SK-N-SH (cell line): ENCODE measurements at regions of chr12 and their contacts with region 1.

Region 1: DNA sequence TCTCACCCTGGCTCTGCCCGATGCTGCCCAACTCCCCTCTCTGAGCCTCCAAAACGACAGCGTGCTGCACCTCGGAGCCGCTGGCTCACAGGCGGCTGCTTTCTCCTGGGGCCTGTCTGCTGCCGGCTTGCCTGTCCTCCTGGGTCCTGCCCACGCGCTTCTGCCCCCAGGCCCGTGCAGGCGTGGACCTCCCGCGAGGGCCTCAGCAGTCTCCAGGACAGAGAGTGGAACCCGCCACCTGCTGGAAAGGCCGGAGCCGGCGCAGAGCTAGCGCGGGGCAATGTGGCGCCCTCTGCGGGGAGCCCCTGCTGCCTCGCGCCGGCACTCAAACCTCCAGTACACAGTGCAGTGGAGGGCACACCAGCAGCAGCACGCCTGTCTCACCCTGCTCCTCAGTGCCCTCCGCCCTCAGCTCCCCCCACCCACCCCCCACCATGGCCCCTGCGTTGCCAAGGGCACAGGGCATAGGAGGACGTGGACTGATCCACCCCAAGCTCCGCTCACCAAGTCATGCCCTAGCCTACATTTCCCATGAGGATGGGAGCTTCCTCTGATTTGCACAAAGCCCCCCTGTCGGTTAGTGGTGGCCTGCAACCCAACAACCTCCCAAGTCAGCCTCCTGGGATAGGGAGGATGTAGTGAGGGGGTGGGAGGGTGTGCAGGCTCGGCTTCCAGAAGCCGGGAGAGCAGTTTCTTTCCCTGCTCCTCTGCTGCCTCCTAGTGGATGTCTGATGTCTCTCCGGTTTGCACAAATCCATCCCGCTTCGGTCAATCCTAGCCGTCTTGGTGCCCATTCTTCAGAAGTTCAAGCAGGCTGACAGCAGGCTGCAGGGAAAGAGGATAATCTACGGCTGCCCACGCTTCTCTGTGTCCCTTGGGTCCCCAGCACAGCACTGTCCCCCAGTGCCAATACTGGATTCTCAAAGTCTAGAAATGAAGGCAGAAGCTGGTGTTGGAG is 25.2 kb downstream of the KRT8 start:
- DNase-seq: peak; percentile 88
- H3K4me3 ChIP-seq: peak overlapping the region; percentile 10 to 51; a peak in 1 of 4 replicates
- H3K27ac ChIP-seq: no peak overlapping the region
- H3K4me1 ChIP-seq: peaks cover 0 to under 1% of the 10 kb centered on the region in 2 experiments; a peak in 1 of 4 replicates
- H3K27me3 ChIP-seq: no peaks in the 10 kb centered on the region
- CTCF ChIP-seq: peak; percentile 74
- EP300 ChIP-seq: no peak
- RAD21 ChIP-seq: peak; percentile 93

Region 2: DNA sequence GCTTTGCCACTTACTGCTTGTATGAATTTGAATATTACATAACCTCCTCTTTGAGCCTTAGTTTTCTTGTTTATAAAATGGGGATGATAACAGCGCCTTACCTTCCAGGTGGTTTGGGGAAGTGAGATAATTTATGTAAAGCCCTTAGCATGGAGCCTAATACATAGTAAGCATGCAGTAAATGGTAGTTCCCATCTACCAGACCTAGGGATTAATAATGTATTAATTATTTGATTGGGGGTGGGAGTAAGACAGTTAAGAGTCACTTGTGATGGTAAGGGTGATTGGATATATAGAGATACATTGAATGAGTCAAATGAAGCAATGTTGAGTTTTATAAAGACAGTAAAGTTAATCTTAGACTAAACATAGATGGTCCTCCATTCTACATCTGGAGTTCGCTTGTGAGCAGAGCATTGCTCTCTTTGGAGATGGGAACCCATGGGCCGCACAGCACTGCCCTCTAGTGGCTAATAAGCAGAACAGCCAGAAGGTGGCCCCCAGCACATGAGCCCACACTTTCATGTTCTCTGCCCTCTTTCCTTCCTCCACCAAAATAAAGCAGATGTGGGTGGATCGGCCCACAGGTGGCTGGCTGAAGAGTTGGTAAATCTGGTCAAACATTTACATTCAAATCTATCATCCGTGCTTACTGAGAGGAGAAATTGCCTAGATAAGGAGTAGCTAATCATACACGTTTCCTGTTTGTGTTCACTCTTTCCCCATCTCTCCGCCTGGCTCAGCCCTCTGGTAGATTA is 899.4 kb before region 1 on chr12:
- CTCF ChIA-PET with region 1: no interaction called
- POLR2A ChIA-PET with region 1: no interaction called
- DNase-seq: peak; percentile 85
- H3K4me3 ChIP-seq: peak overlapping the region in 1 of 2 experiments; percentile 26; a peak in 1 of 4 replicates
- H3K27ac ChIP-seq: peak overlapping the region in 1 of 2 experiments; percentile 8; a peak in 1 of 4 replicates
- H3K4me1 ChIP-seq: peaks cover 0 to under 1% of the 10 kb centered on the region in 2 experiments; a peak in 1 of 4 replicates
- H3K27me3 ChIP-seq: no peaks in the 10 kb centered on the region
- CTCF ChIP-seq: peak; percentile 97
- EP300 ChIP-seq: no peak
- RAD21 ChIP-seq: peak; percentile 97

Region 3: GRCh38 chr12:52156736-52157565 is 722.7 kb before region 1 on chr12:
- CTCF ChIA-PET with region 1: interaction called, 27 read pairs
- POLR2A ChIA-PET with region 1: no interaction called
- DNase-seq: peak; percentile 92
- H3K4me3 ChIP-seq: no peak overlapping the region; a peak in 1 of 4 replicates
- H3K27ac ChIP-seq: no peak overlapping the region
- H3K4me1 ChIP-seq: no peaks in the 10 kb centered on the region
- H3K27me3 ChIP-seq: no peaks in the 10 kb centered on the region
- CTCF ChIP-seq: peak; percentile 98
- EP300 ChIP-seq: no peak
- RAD21 ChIP-seq: peak; percentile 99

Region 4: DNA sequence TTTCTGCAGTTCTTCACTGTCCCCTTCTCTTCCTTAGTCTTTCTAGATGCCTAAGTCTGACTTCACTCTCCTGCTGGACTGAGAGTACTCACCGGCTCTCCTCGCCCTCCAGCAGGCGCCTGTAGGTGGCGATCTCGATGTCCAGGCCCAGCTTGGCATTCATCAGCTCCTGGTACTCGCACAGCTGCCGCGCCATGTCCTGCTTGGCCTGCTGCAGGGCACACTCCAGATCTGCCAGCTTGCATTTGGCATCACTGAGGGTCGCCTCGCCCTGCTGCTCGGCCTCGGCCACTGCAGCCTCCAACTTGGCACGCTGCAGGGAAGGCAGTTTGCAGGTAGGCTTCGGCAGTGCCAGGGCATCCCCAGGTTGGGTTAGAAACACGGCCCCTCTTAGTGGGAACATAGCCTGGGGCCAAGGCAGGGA is 499.4 kb before region 1 on chr12:
- CTCF ChIA-PET with region 1: interaction called, 58 read pairs
- POLR2A ChIA-PET with region 1: no interaction called
- DNase-seq: peak; percentile 53
- H3K4me3 ChIP-seq: no peak overlapping the region
- H3K27ac ChIP-seq: no peak overlapping the region
- H3K4me1 ChIP-seq: no peaks in the 10 kb centered on the region; a peak in 1 of 4 replicates
- H3K27me3 ChIP-seq: peaks cover 75% of the 10 kb centered on the region
- CTCF ChIP-seq: peak; percentile 68
- EP300 ChIP-seq: no peak
- RAD21 ChIP-seq: peak; percentile 47

Region 5: GRCh38 chr12:52582971-52583456 is 296.7 kb before region 1 on chr12:
- CTCF ChIA-PET with region 1: interaction called, 76 read pairs
- POLR2A ChIA-PET with region 1: no interaction called
- DNase-seq: peak; percentile 76
- H3K4me3 ChIP-seq: peak overlapping the region in 1 of 2 experiments; percentile 25; a peak in 1 of 4 replicates
- H3K27ac ChIP-seq: no peak overlapping the region
- H3K4me1 ChIP-seq: no peaks in the 10 kb centered on the region
- H3K27me3 ChIP-seq: peaks cover 44% of the 10 kb centered on the region
- CTCF ChIP-seq: peak; percentile 67
- EP300 ChIP-seq: no peak
- RAD21 ChIP-seq: peak; percentile 77

Region 6: DNA sequence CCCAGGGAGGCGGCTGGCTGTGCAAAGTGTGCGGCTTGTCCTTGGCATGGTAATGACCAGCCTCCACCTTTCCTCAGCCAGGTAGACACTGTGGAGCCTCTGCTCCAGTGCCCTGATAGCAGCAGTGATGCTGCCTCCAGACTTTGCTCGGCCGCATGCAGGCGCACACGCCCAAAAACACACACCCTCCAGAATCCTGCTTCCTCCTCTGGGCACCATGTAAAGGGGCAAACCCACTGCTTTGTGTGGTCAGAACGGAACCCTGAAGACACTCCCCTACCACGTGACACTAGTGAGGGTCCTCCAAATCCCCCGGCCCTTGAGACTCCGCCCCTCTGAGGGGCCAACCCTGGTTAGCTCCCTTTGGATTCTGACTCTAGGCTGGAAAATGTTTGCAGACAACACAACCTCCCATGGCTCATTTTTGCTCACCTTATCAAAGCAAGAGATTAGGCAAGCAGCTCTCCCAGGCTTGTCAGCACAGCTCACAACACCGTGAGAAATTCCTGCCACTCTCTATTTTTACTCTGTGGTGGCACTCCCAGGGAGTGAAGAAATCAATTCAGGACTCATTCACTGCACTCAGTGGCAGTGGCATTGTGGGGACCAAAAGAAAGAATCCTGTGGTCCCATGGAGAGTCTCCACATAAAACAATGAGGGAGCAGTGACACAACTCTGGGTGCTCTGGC is 180.9 kb before region 1 on chr12:
- CTCF ChIA-PET with region 1: no interaction called
- POLR2A ChIA-PET with region 1: no interaction called
- DNase-seq: no peak
- H3K4me3 ChIP-seq: no peak overlapping the region
- H3K27ac ChIP-seq: no peak overlapping the region
- H3K4me1 ChIP-seq: no peaks in the 10 kb centered on the region
- H3K27me3 ChIP-seq: peaks cover 67% of the 10 kb centered on the region; the same call in 1 of the 2 replicates
- CTCF ChIP-seq: no peak
- EP300 ChIP-seq: no peak
- RAD21 ChIP-seq: no peak

Region 7: DNA sequence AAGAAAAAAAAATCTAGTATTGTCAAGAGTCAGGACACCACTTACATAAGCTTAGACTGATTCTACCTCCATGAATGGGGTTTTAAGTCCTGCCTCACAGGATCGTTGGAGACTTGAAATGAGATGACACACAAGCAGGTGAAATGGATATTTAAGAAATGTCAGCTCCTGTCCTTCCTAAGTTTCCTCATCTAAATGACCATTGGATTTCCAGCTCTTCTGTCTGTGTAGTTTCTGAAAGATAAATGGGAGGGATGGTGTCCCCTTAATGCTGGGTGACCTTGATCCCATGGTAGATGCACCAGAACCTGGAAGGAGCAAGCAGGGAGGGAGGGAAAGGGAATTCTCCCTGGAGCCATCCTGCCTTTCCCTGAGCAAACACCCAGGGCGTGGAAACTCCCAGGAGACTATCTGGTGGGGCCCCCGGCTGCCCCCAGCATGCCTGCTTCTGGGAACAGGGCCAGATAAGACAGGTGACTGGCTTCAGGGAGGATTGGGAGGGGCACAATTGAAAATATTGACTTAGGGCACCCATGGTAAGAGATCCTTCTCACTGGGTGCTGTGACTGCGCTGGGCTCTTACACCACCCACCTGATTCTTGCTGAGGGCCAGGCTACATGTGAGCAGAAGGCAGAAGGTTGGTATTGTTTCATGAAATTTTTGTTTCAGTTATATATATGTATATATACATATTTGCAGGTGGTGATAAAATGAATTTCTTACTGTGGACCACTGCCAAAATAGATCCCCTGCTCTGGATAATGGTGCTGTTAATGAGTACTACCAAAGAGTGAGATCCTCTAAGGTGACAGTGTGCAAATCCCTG is 15.6 kb after region 1 on chr12:
- CTCF ChIA-PET with region 1: interaction called, 91 read pairs
- POLR2A ChIA-PET with region 1: no interaction called
- DNase-seq: no peak
- H3K4me3 ChIP-seq: no peak overlapping the region
- H3K27ac ChIP-seq: no peak overlapping the region
- H3K4me1 ChIP-seq: peaks cover 0 to 5% of the 10 kb centered on the region in 2 experiments; a peak in 1 of 4 replicates
- H3K27me3 ChIP-seq: no peaks in the 10 kb centered on the region
- CTCF ChIP-seq: no peak
- EP300 ChIP-seq: no peak
- RAD21 ChIP-seq: no peak

Region 8: GRCh38 chr12:52992699-52993557 is 113.3 kb after region 1 on chr12:
- CTCF ChIA-PET with region 1: interaction called, 485 read pairs
- POLR2A ChIA-PET with region 1: no interaction called
- DNase-seq: no peak
- H3K4me3 ChIP-seq: no peak overlapping the region
- H3K27ac ChIP-seq: no peak overlapping the region
- H3K4me1 ChIP-seq: no peaks in the 10 kb centered on the region
- H3K27me3 ChIP-seq: no peaks in the 10 kb centered on the region
- CTCF ChIP-seq: no peak
- EP300 ChIP-seq: no peak
- RAD21 ChIP-seq: no peak